ENCODE measurements at regions of chr17 and their contacts with region 1.

Region 1: GRCh38 chr17:1555651-1556471 is 6.7 kb downstream of the PITPNA start:
- DNase-seq: no peak
- H3K4me3 ChIP-seq: no peak overlapping the region
- H3K27ac ChIP-seq: no peak overlapping the region
- H3K4me1 ChIP-seq: peaks cover 9% of the 10 kb centered on the region
- H3K27me3 ChIP-seq: no peaks in the 10 kb centered on the region
- CTCF ChIP-seq: no peak

Region 2: GRCh38 chr17:1251866-1252608 is 303.8 kb before region 1 on chr17:
- CTCF ChIA-PET with region 1: no interaction called
- dilution Hi-C with region 1: loop called (anchors 5 kb)
- in situ Hi-C with region 1: no loop called
- intact Hi-C with region 1: no loop called
- DNase-seq: no peak
- H3K4me3 ChIP-seq: no peak overlapping the region
- H3K27ac ChIP-seq: no peak overlapping the region
- H3K4me1 ChIP-seq: no peaks in the 10 kb centered on the region
- H3K27me3 ChIP-seq: no peaks in the 10 kb centered on the region
- CTCF ChIP-seq: no peak

Region 3: GRCh38 chr17:1379930-1380313 is 175.9 kb before region 1 on chr17:
- CTCF ChIA-PET with region 1: no interaction called
- dilution Hi-C with region 1: loop called (anchors 10 kb)
- in situ Hi-C with region 1: no loop called
- intact Hi-C with region 1: no loop called
- DNase-seq: peak; percentile 43
- H3K4me3 ChIP-seq: no peak overlapping the region
- H3K27ac ChIP-seq: no peak overlapping the region
- H3K4me1 ChIP-seq: peaks cover 6% of the 10 kb centered on the region
- H3K27me3 ChIP-seq: no peaks in the 10 kb centered on the region
- CTCF ChIP-seq: no peak

Measured in mammary epithelial cell (primary cell).